Calu3 (cell line): ENCODE measurements at regions of chr5 and their contacts with region 1.

Region 1: DNA sequence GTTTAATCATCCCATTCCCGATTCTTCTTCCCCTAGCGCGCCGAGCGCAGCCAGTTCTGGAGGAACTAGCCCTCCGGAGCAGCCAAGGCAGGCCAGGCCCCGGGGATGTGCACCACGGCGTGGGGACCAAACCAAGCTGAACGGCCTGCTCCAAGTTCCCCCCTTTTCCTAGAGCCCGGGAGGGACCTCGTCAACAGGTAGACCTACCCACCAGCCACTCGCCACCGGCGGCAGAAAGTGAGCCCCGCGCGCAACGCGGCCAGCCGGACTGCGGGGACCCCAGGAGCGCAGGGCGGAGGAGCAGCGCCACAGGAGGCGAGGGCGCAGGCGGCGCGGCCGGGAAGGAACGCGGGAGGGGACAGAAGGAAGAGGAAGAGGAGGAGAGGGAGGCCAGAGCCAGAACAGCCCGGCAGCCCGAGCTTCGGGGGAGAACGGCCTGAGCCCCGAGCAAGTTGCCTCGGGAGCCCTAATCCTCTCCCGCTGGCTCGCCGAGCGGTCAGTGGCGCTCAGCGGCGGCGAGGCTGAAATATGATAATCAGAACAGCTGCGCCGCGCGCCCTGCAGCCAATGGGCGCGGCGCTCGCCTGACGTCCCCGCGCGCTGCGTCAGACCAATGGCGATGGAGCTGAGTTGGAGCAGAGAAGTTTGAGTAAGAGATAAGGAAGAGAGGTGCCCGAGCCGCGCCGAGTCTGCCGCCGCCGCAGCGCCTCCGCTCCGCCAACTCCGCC is at the start of gene ISL1:
- DNase-seq: peak; percentile 88
- H3K4me3 Mint-ChIP-seq: peak within 1 kb of the TSS; percentile 91
- H3K27ac Mint-ChIP-seq: peak within 1 kb of the TSS; percentile 89
- H3K4me1 Mint-ChIP-seq: peaks cover 45% of the 10 kb centered on the region
- H3K27me3 Mint-ChIP-seq: no peaks in the 10 kb centered on the region
- CTCF ChIP-seq: no peak
- total RNA-seq, gene ISL1: 9.4 and 11.7 TPM in 2 replicates

Region 2: GRCh38 chr5:51433052-51433710 is 50.3 kb after region 1 on chr5:
- CTCF ChIA-PET with region 1: no interaction called
- intact Hi-C with region 1: loop called (anchors 5 kb)
- DNase-seq: no peak
- H3K4me3 Mint-ChIP-seq: peak overlapping the region; percentile 30
- H3K27ac Mint-ChIP-seq: peak overlapping the region; percentile 89
- H3K4me1 Mint-ChIP-seq: peaks cover 30% of the 10 kb centered on the region
- H3K27me3 Mint-ChIP-seq: no peaks in the 10 kb centered on the region
- CTCF ChIP-seq: no peak

Region 3: GRCh38 chr5:51651889-51652288 is 269.0 kb after region 1 on chr5:
- CTCF ChIA-PET with region 1: no interaction called
- intact Hi-C with region 1: loop called (anchors 10 kb)
- DNase-seq: no peak
- H3K4me3 Mint-ChIP-seq: no peak overlapping the region
- H3K27ac Mint-ChIP-seq: no peak overlapping the region
- H3K4me1 Mint-ChIP-seq: peaks cover 37% of the 10 kb centered on the region
- H3K27me3 Mint-ChIP-seq: no peaks in the 10 kb centered on the region
- CTCF ChIP-seq: no peak

Region 4: DNA sequence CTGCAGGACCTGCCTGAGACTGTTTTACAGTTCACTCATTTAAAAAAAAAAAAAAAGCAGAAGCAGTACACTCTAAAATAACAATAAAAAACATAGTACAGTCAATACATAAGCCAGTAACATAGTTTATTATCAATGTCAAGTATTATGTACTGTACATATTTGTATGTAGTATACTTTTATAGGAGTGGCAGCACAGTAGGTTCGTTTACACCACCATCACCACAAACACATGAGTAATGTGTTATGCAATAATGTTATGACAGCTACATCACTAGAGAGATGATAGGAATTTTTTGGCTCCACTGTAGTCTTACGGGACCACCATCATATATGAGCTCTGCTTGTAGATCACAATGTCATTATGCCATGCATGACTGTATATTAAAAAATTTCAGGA is 463.1 kb after region 1 on chr5:
- CTCF ChIA-PET with region 1: interaction called, 9 read pairs
- intact Hi-C with region 1: loop called (anchors 2 kb)
- DNase-seq: no peak
- H3K4me3 Mint-ChIP-seq: no peak overlapping the region
- H3K27ac Mint-ChIP-seq: no peak overlapping the region
- H3K4me1 Mint-ChIP-seq: no peaks in the 10 kb centered on the region
- H3K27me3 Mint-ChIP-seq: no peaks in the 10 kb centered on the region
- CTCF ChIP-seq: no peak

Region 5: DNA sequence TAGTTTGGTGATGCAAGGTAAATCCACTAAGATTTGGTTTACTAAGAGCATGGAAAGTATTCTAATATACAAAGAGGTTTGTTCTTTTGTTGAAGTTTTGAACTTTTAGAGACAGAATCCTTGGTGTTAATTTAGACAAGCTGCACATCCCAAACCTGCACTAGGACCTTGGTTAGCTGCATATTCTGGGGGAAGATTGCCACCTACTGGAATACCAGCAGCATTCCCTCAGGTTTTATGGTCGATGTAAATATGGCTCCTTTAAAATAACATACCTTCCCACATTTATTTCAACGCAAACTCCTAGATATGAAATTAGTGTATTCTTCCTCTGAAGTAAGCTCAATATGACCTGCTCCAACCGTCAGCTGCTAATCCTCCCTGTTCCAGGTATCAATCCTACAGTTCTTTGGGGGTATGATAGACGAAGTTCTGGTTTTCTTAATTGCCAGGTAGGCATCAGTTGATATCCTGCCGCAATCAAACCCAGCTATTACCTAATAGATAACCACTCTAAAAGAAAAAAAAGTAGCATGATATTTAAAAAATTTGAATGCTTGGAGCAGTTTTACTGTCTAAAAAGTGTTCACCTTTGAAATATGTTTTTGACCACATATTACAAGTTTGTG is 624.4 kb after region 1 on chr5:
- CTCF ChIA-PET with region 1: no interaction called
- intact Hi-C with region 1: loop called (anchors 2 kb)
- DNase-seq: peak; percentile 54
- H3K4me3 Mint-ChIP-seq: peak overlapping the region; percentile 43
- H3K27ac Mint-ChIP-seq: no peak overlapping the region
- H3K4me1 Mint-ChIP-seq: peaks cover 15% of the 10 kb centered on the region
- H3K27me3 Mint-ChIP-seq: no peaks in the 10 kb centered on the region
- CTCF ChIP-seq: peak; percentile 56